ENCODE measurements at regions of chr4 and their contacts with region 1.

Region 1: DNA sequence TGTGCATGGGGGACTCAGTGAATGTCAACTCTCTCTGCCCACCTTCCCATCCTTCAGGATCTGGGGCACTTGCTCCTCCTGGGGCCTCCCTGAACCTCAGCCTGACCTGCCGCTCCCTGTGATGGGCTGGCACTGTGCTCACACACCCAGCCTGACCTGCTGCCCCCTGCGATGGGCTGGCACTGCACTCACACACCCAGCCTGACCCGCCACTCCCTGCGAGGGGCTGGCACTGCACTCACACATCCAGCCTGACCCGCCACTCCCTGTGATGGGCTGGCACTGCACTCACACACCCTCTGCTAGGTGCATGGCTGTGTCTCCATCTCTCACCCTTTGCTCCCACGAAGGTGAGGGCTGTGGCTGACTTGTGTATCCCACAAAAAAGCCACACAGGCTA is 103.4 kb downstream of the ABLIM2 start:
- DNase-seq: no peak
- ATAC-seq: no peak
- H3K4me3 ChIP-seq: no peak overlapping the region
- H3K27ac ChIP-seq: no peak overlapping the region
- H3K4me1 ChIP-seq: no peaks in the 10 kb centered on the region
- H3K27me3 ChIP-seq: peaks cover 37% of the 10 kb centered on the region
- CTCF ChIP-seq: no peak
- POLR2A ChIP-seq: no peak
- RAD21 ChIP-seq: no peak

Region 2: GRCh38 chr4:8144359-8144758 is 89.2 kb after region 1 on chr4:
- CTCF ChIA-PET with region 1: no interaction called
- POLR2A ChIA-PET with region 1: interaction called, 17 read pairs
- dilution Hi-C with region 1: no loop called
- in situ Hi-C with region 1: no loop called
- intact Hi-C with region 1: no loop called
- DNase-seq: no peak
- ATAC-seq: no peak
- H3K4me3 ChIP-seq: no peak overlapping the region
- H3K27ac ChIP-seq: no peak overlapping the region
- H3K4me1 ChIP-seq: no peaks in the 10 kb centered on the region
- H3K27me3 ChIP-seq: peaks cover 77% of the 10 kb centered on the region
- CTCF ChIP-seq: no peak
- POLR2A ChIP-seq: no peak
- RAD21 ChIP-seq: no peak

Region 3: DNA sequence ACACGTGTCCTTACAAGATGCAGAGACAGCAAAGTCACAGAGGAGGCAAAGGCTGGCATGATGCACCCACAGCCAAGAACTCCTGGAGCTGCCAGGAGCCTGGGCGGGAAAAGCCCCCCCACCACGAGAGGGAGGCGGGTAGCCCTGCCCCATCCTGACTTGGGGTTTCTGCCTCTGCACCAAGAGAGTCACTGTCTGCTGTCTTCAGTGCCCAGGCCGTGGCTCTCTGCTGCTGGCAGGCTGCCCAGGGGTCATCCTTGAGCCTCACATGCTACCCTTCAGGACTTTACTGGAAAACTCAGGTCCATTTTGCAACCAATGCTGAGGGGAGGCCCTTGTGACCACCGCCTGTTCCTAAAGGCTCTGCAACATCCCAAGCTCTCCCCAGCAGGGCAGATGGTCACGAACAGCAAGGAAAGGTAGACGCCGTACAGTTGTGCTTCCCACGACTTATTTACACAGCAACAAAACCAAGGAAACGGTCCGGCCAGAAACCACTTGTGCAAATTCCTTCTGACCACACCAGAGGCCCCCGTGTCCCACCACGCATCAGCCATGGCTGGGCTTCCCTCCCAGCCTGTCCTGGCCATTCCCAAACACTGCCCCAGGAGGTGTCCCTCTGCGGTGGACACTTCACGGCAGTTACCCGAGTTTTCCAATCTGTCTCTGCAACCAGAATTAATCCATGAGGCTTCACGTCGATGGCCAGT is 328.4 kb after region 1 on chr4:
- CTCF ChIA-PET with region 1: no interaction called
- POLR2A ChIA-PET with region 1: no interaction called
- dilution Hi-C with region 1: no loop called
- in situ Hi-C with region 1: no loop called
- intact Hi-C with region 1: no loop called
- DNase-seq: peak; percentile 42
- ATAC-seq: no peak; the same call in 1 of the 2 replicates
- H3K4me3 ChIP-seq: no peak overlapping the region
- H3K27ac ChIP-seq: no peak overlapping the region
- H3K4me1 ChIP-seq: peaks cover 2% of the 10 kb centered on the region; the same call in 1 of the 2 replicates
- H3K27me3 ChIP-seq: no peaks in the 10 kb centered on the region
- CTCF ChIP-seq: no peak
- POLR2A ChIP-seq: no peak
- RAD21 ChIP-seq: no peak

Measured in IMR-90 (cell line).